ENCODE measurements at regions of chr4 and their contacts with region 1.

Region 1: DNA sequence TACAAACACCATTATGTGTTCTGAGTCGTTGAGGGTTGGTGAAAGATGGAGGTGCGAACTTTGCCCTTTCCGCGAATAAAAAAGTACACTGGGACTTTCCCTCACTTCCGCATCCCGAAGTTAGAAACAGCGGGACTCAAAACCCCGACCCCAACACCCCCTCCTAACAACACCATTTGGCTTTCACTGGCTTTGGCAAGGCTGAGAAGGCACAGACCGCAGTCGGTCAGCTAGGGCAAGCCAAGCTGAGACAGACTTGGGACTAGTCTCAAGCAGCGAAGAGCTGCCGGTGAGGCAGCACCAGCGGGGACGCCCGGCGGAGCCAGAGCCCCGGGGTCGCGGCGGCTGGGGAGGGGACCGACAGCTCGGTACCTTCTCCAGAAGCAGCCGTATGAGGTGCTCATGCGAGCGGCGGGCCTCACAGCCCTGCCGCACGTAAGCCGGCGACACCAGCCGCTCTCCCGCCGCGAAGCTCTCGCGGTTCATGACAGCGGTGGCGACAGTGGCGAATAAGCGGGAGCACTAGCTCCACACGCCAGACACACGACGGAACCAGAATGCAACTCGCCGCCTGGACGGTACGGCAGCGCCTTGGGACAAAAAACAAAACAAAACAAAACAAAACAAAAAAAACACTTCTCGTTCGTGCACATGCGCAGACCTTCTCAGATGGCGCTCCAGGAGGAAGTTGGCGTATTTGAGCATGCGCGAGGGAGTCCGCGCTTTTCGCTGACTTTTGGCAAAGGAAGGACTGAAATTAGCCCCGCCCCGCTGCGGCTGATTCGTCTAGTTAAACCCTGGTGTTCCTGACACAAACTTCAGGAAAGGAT is at the start of gene SEPSECS:
- DNase-seq: peak; percentile 87 to 96 (median 93)
- ATAC-seq: peak; percentile 81 to 83
- H3K4me3 Mint-ChIP-seq: peak within 1 kb of the TSS; percentile 86 to 97 (median 92)
- H3K27ac Mint-ChIP-seq: peak within 1 kb of the TSS; percentile 91 to 100 (median 98)
- H3K4me1 Mint-ChIP-seq: peaks cover 24 to 62% (median 52%) of the 10 kb centered on the region in 4 donors
- H3K27me3 Mint-ChIP-seq: peaks cover 0 to 4% (median 0%) of the 10 kb centered on the region in 5 donors
- polyA plus RNA-seq, gene SEPSECS: 1.7 to 2.3 (median 2.0) TPM

Region 2: DNA sequence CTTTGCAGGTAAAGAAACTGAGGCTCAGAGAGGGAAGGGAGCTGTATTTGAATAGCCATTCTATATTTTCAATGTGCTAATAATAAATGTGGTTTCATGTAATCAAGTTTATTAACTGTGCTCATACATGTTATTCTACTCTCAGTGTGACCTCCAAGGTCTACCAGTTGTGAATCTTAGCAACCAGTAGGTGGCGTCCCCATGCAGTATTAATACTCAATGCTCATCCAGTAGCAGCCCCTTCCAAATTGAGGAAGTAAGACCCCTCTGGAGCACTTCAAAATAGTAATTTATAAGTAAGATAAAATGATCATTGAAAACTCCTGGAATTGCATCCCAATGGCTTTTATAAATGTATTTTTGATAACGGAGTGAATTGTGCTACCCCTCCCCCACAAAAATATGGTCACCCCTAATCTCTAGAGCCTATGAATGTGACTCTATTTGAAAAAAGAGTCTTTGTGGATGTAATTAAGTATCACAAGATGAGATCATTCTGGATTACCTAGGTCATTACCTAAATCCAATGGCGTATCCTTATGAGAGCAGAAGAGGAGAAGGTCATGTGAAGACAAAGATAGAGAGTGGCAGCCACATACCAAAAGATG is 20.5 kb after region 1 on chr4:
- POLR2A ChIA-PET with region 1: interaction called, 12 read pairs
- DNase-seq: peak in 6 of 10 donors; percentile 16 to 41 (median 21)
- ATAC-seq: peak; percentile 52 to 65
- H3K4me3 Mint-ChIP-seq: no peak overlapping the region
- H3K27ac Mint-ChIP-seq: no peak overlapping the region
- H3K4me1 Mint-ChIP-seq: peaks cover 20 to 55% (median 29%) of the 10 kb centered on the region in 4 donors
- H3K27me3 Mint-ChIP-seq: no peaks in the 10 kb centered on the region

Region 3: GRCh38 chr4:25234390-25235370 is 74.6 kb after region 1 on chr4:
- POLR2A ChIA-PET with region 1: interaction called, 45 read pairs
- DNase-seq: peak in 9 of 10 donors; percentile 15 to 75 (median 41)
- ATAC-seq: peak; percentile 39 to 54
- H3K4me3 Mint-ChIP-seq: peak overlapping the region; percentile 84 to 97 (median 92)
- H3K27ac Mint-ChIP-seq: peak overlapping the region; percentile 86 to 95 (median 93)
- H3K4me1 Mint-ChIP-seq: peaks cover 16 to 48% (median 40%) of the 10 kb centered on the region in 4 donors
- H3K27me3 Mint-ChIP-seq: no peaks in the 10 kb centered on the region